Head of caudate nucleus (tissue), 42 donors: ENCODE measurements at regions of chr3 and their contacts with region 1.

Region 1: DNA sequence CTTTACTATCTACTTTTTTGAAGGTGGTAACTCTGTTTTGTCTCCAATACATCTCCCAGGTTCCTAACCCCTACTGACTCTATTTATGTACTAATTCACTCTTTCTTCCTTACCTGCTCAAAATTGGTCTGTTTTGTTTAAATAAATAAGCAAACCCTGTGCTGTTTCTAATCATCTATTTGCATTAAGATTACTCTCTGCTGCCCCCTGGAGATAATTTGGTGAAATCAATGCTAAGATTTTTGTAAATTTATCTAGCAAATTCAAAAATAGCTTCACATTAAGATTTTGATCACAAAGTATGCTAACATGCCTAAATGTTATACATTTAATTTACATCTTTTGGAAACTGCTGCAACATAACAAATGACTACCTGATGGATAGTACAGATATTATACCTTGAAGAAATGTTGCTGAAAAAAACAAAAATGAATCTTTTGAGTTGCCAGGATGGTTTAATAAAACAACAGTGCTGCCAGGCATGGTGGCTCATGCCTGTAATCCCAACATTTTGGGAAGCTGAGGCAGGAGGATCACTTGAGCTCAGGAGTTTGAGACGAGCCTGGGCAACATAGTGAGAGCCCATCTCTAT is 4.4 kb upstream of the CD200R1 start:
- DNase-seq: peak in 4 of 42 donors; percentile 14 to 38 (median 22)

Region 2: GRCh38 chr3:112642912-112643506 is 336.3 kb before region 1 on chr3:
- intact Hi-C with region 1: loop called (anchors 5 kb)
- DNase-seq: peak; percentile 68 to 93 (median 84)

Region 3: DNA sequence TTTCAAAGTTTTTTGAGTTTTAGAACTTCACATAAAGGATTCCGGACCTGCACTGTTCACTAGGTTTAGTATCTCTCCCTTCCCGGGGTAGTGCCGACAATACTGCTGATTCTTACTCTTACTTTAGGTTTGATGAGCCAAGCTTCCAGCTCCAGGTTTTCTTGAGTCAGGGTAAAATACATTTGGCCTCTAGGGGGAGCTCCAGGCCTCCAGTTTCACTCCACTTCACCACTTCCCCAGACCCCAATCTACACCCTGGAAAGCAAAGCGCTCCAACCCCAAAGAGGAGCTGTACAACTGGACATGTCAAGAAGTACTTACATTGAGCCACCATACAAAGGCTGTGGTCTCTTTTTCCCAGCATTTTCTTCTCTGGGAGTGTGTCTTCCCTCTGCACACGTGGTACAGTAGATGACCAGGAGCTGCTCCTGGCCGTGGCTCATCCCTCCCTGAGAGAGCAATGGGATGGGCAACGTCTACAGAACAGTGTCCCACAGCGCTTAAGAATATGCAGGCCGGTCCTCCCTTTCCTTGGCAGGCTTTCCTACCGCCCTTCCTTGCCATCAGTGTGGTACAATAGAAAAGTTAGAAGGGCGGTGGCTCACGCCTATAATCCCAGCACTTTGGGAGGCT is 244.5 kb before region 1 on chr3:
- intact Hi-C with region 1: loop called (anchors 10 kb)
- DNase-seq: peak in 38 of 42 donors; percentile 8 to 79 (median 52)

Region 4: DNA sequence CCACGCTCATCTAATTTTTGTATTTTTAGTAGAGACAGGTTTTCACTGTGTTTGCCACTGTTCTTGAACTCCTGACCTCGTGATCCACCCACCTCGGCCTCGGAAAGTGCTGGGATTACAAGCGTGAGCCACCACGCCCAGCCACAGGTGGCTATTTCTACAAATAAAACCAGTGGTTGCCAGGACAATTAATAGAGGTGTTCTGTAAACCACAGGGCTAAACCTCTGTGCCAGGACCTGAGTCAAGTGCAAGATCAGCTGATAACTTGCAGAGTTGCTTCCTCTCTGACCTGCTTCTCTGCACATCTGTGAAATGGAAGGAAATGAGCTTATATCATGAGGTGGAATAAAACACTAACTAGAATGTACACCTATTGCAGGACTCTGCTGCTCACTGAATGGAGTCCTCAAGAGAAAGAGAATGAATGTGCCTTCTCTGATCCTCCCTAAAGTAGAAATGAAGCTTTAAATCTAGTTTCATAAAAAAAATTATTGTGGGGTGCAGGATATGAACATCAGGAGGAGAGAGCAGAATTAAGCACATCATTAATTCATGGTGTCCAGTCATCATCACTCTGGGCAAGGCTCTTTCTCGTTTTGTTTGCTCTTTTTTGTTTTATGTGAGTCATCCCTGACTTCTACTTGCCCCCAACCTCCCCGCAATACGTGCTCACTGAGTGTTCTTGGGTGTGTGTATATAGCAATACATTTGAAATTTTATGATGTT is 205.3 kb before region 1 on chr3:
- intact Hi-C with region 1: no loop called
- DNase-seq: no peak

Region 5: DNA sequence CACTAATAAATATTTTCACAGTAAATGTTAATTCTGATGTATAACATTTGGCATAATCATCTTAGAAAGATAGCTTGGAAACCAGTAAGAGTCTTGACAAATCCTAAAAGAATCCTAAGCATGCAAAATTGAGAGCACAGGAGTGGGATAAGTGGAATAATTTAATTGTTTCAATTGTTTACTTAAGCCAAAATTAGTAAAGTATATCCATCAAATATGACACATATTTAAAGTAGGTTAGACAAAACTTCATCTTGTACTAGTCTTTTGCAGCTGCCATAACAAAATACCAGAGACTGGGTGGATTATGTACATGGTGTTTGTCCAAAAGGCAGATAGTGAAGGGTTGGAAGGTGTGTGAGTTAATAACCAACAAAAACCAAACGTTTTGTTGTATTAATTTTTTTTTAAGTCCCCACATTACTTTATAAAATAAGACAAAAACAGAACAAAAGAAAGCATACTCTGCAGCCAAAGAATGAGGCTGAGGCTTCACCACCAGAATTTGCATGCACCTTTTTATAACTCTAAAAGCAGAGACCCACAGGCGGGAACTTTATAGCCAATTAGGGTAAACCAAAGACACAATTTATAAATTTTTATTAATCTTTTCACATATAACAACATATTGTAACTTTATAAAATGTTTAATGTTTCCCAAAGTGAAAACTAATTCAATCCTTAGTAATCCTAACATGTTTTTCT is 90.8 kb before region 1 on chr3:
- intact Hi-C with region 1: no loop called
- DNase-seq: no peak

Region 6: DNA sequence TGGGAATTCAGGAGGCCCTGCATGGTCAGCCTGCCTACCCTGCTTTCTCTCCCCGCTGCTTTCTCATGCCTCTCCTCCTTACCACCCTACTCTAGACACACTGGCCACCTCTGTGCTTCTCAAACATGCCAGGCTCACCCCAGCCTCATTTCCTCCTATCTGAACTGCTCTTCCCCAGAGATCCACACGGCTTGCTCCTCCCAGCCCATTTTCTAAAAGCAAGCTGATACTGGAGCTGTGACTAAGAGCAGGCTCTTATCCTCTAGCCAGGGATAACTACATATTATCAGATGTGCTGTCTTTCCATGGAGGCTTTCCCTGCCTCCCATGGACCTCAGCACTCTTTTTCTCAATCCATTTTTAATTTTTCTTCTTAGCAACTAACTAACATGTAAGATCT is 318.0 kb after region 1 on chr3:
- intact Hi-C with region 1: no loop called
- DNase-seq: no peak